ENCODE measurements at regions of chr10 and their contacts with region 1.

Region 1: GRCh38 chr10:95246579-95247051 is 44.2 kb downstream of the PDLIM1 start:
- DNase-seq: peak; percentile 21 to 54 (median 47)
- H3K4me3 ChIP-seq: no peak overlapping the region
- H3K27ac ChIP-seq: no peak overlapping the region
- H3K4me1 ChIP-seq: no peaks in the 10 kb centered on the region
- H3K27me3 ChIP-seq: no peaks in the 10 kb centered on the region
- CTCF ChIP-seq: no peak
- EP300 ChIP-seq: no peak
- POLR2A ChIP-seq: no peak

Region 2: GRCh38 chr10:95327367-95327766 is 80.8 kb after region 1 on chr10:
- intact Hi-C with region 1: loop called in 1 of 4 experiments (anchors 5 kb)
- DNase-seq: peak in 2 of 5 donors; percentile 23 to 28
- H3K4me3 ChIP-seq: no peak overlapping the region
- H3K27ac ChIP-seq: no peak overlapping the region
- H3K4me1 ChIP-seq: no peaks in the 10 kb centered on the region
- H3K27me3 ChIP-seq: no peaks in the 10 kb centered on the region
- CTCF ChIP-seq: no peak
- EP300 ChIP-seq: no peak
- POLR2A ChIP-seq: no peak

Region 3: DNA sequence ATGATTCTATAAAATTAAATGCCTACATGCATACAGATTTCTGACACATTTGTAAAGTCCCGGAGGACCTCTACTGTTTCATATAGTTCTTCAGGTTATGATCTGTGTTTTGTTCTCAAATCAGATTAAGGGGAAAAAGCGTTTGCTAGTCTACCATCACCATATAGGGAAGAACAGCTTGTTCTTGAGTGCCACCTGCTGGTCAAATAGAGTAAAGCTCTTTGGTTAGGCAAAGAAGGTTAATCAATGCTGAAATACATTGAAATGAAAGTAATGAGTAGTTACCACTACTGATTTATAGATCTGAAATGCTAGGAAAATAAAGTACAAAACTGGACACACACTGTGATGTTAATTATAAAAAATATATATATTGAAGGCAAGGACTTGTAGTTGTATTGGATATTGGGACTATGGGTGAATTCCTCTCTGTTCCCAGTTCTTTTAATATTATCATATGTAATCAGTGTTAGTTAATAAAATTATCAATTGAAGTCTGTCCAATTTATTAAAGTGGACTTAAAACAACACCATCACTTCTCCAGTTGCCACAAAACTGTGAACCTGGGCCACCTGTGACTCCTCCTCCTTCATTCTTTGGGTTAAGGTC is 116.8 kb after region 1 on chr10:
- intact Hi-C with region 1: loop called in 1 of 4 experiments (anchors 5 kb)
- DNase-seq: peak in 1 of 5 donors; percentile 35
- H3K4me3 ChIP-seq: no peak overlapping the region
- H3K27ac ChIP-seq: no peak overlapping the region
- H3K4me1 ChIP-seq: no peaks in the 10 kb centered on the region
- H3K27me3 ChIP-seq: no peaks in the 10 kb centered on the region
- CTCF ChIP-seq: peak; percentile 43 to 73 (median 72)
- EP300 ChIP-seq: no peak
- POLR2A ChIP-seq: no peak